ENCODE measurements at regions of chrX and their contacts with region 1.

Region 1: GRCh38 chrX:53678667-53679066 is 7.9 kb downstream of the HUWE1 start:
- DNase-seq: no peak
- ATAC-seq: peak; percentile 28; the same call in 1 of the 3 replicates
- H3K4me3 ChIP-seq: no peak overlapping the region
- H3K27ac ChIP-seq: no peak overlapping the region
- H3K4me1 ChIP-seq: no peaks in the 10 kb centered on the region
- H3K27me3 ChIP-seq: no peaks in the 10 kb centered on the region
- CTCF ChIP-seq: peak; percentile 33 to 41 (median 38); a peak in 5 of 6 replicates
- EP300 ChIP-seq: no peak
- POLR2A ChIP-seq: no peak
- RAD21 ChIP-seq: peak; percentile 36; the same call in 1 of the 2 replicates

Region 2: GRCh38 chrX:53580742-53581504 is 97.7 kb before region 1 on chrX:
- CTCF ChIA-PET with region 1: no interaction called
- POLR2A ChIA-PET with region 1: no interaction called
- RAD21 ChIA-PET with region 1: no interaction called
- SMC1A ChIA-PET with region 1: no interaction called
- in situ Hi-C with region 1: no loop called
- intact Hi-C with region 1: no loop called
- DNase-seq: no peak
- ATAC-seq: no peak
- H3K4me3 ChIP-seq: no peak overlapping the region
- H3K27ac ChIP-seq: no peak overlapping the region
- H3K4me1 ChIP-seq: no peaks in the 10 kb centered on the region
- H3K27me3 ChIP-seq: no peaks in the 10 kb centered on the region
- CTCF ChIP-seq: no peak
- EP300 ChIP-seq: no peak
- POLR2A ChIP-seq: no peak
- RAD21 ChIP-seq: no peak

Region 3: DNA sequence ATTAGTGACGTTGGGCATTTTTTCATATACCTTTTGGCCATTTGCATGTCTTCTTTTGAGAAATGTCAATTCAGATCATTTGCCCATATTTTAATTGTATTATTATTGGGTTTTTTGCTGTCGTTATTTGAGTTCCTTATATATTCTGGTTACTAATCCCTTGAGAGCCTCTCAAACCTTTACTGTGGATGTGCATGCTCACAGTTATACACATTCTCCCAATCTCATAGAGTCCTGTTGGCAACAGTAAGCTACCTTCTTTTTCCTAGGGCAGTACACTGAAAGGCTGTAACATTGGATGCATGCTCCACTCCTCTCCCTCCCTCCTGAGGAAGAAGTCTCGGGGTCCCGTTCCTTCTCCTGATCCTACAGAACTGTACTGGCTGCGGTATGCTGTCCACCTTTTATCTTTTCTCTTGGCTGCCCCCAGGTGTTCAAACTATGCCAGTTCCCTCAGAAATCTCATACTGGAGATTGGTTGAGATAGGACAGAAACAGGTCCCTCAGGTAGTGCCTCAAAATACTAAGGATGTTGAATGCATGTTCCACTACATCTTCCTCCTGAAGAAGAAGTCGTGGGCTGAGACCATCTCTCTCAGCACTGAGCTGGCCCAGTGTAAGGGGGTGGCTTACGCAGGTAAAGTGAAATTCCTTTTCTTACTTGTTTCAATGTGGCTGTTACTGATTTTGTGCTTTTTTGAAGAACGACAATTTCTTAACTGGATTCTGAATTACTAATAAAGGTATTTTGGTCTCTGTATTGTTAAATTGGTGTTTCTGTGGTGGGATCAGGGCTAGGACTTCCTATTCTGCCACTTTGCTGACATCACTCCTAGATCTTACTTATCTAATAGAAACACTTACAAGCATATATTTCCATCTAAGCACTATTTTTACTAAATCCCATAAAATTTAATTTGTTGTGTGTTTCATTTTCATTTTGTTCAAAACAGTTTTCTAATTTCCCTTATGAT is 153.3 kb after region 1 on chrX:
- CTCF ChIA-PET with region 1: interaction called, 28 read pairs
- POLR2A ChIA-PET with region 1: no interaction called
- RAD21 ChIA-PET with region 1: interaction called, 14 read pairs
- SMC1A ChIA-PET with region 1: interaction called, 11 read pairs
- in situ Hi-C with region 1: loop called (anchors 5 kb)
- intact Hi-C with region 1: no loop called
- DNase-seq: peak; percentile 40
- ATAC-seq: peak; percentile 98
- H3K4me3 ChIP-seq: no peak overlapping the region
- H3K27ac ChIP-seq: no peak overlapping the region
- H3K4me1 ChIP-seq: no peaks in the 10 kb centered on the region
- H3K27me3 ChIP-seq: no peaks in the 10 kb centered on the region
- CTCF ChIP-seq: peak; percentile 59 to 66 (median 62)
- EP300 ChIP-seq: no peak
- POLR2A ChIP-seq: no peak
- RAD21 ChIP-seq: peak; percentile 70

Measured in GM12878 (cell line).